H1 (cell line): ENCODE measurements at regions of chr12 and their contacts with region 1.

Region 1: GRCh38 chr12:101323255-101323654 is 43.4 kb downstream of the UTP20 start:
- DNase-seq: no peak
- H3K4me3 ChIP-seq: no peak overlapping the region
- H3K27ac ChIP-seq: no peak overlapping the region
- H3K4me1 ChIP-seq: no peaks in the 10 kb centered on the region
- H3K27me3 ChIP-seq: no peaks in the 10 kb centered on the region
- CTCF ChIP-seq: no peak
- EP300 ChIP-seq: no peak
- POLR2A ChIP-seq: no peak
- RAD21 ChIP-seq: no peak

Region 2: GRCh38 chr12:101172316-101172715 is 150.9 kb before region 1 on chr12:
- CTCF ChIA-PET with region 1: interaction called, 56 read pairs
- POLR2A ChIA-PET with region 1: no interaction called
- DNase-seq: peak; percentile 47 to 69
- H3K4me3 ChIP-seq: no peak overlapping the region
- H3K27ac ChIP-seq: no peak overlapping the region
- H3K4me1 ChIP-seq: no peaks in the 10 kb centered on the region
- H3K27me3 ChIP-seq: no peaks in the 10 kb centered on the region
- CTCF ChIP-seq: peak; percentile 82 to 94 (median 86)
- EP300 ChIP-seq: no peak
- POLR2A ChIP-seq: no peak
- RAD21 ChIP-seq: peak; percentile 93 to 96

Region 3: GRCh38 chr12:101280006-101280505 is 43.2 kb before region 1 on chr12 and contains the start of gene UTP20:
- CTCF ChIA-PET with region 1: interaction called, 13 read pairs
- POLR2A ChIA-PET with region 1: no interaction called
- DNase-seq: peak; percentile 59 to 96
- H3K4me3 ChIP-seq: peak within 1 kb of the TSS; percentile 80 to 100 (median 98)
- H3K27ac ChIP-seq: peak within 1 kb of the TSS; percentile 78
- H3K4me1 ChIP-seq: no peaks in the 10 kb centered on the region
- H3K27me3 ChIP-seq: no peaks in the 10 kb centered on the region
- CTCF ChIP-seq: no peak
- EP300 ChIP-seq: no peak
- POLR2A ChIP-seq: peak; percentile 56 to 93
- RAD21 ChIP-seq: no peak
- total RNA-seq, gene UTP20: 43.7 and 48.4 TPM in 2 replicates

Region 4: GRCh38 chr12:101336437-101336836 is 13.2 kb after region 1 on chr12:
- CTCF ChIA-PET with region 1: interaction called, 19 read pairs
- POLR2A ChIA-PET with region 1: no interaction called
- DNase-seq: no peak
- H3K4me3 ChIP-seq: no peak overlapping the region
- H3K27ac ChIP-seq: no peak overlapping the region
- H3K4me1 ChIP-seq: no peaks in the 10 kb centered on the region
- H3K27me3 ChIP-seq: no peaks in the 10 kb centered on the region
- CTCF ChIP-seq: no peak
- EP300 ChIP-seq: no peak
- POLR2A ChIP-seq: no peak
- RAD21 ChIP-seq: no peak

Region 5: GRCh38 chr12:101361455-101361854 is 38.2 kb after region 1 on chr12:
- CTCF ChIA-PET with region 1: interaction called, 24 read pairs
- POLR2A ChIA-PET with region 1: no interaction called
- DNase-seq: no peak
- H3K4me3 ChIP-seq: no peak overlapping the region
- H3K27ac ChIP-seq: no peak overlapping the region
- H3K4me1 ChIP-seq: no peaks in the 10 kb centered on the region
- H3K27me3 ChIP-seq: no peaks in the 10 kb centered on the region
- CTCF ChIP-seq: no peak
- EP300 ChIP-seq: no peak
- POLR2A ChIP-seq: no peak
- RAD21 ChIP-seq: no peak